IMR-90 (cell line): ENCODE measurements at regions of chr17 and their contacts with region 1.

Region 1: GRCh38 chr17:55053855-55054254 is 85.3 kb downstream of the STXBP4 start:
- DNase-seq: peak; percentile 13
- ATAC-seq: no peak
- H3K4me3 ChIP-seq: no peak overlapping the region
- H3K27ac ChIP-seq: no peak overlapping the region
- H3K4me1 ChIP-seq: no peaks in the 10 kb centered on the region
- H3K27me3 ChIP-seq: no peaks in the 10 kb centered on the region
- CTCF ChIP-seq: peak; percentile 46
- POLR2A ChIP-seq: no peak
- RAD21 ChIP-seq: peak; percentile 49

Region 2: DNA sequence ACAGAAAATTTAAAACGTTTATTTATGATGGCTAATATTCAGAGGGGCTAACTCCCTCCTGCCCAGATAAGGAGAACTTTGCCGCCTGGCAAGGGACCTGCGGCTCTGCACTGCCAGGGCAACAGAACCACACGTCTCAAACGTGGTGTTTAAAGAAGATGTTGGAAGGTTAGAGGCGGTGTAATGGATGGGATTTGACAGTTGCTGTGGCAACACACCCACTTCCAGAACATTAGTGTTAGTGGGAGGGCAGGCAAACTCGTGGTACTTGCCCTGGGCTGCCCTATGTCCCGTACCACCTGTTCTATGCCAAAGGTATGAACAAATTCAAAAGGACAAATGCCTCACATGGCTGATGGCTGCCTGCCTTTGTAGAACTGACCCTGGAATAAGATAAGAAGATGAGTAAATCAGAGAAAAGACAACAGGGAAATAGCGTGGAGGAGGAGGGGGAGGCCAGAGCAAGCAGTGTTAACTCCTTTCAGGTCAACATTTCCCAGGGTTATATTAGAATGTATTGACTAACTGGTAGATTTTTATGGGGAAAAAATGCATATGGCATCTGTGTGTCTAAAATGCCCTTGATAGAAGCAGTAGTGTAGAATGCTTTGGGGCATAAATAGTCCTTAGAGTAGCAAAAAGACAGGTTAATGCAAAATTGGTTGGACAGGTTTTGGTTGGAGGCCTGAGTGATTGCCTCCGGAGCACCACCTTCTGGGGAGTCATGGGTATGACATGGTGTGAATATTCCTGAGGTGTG is 241.7 kb after region 1 on chr17:
- CTCF ChIA-PET with region 1: no interaction called
- POLR2A ChIA-PET with region 1: no interaction called
- dilution Hi-C with region 1: no loop called
- in situ Hi-C with region 1: loop called (anchors 10 kb)
- intact Hi-C with region 1: loop called (anchors 1 kb)
- DNase-seq: peak; percentile 43
- ATAC-seq: peak; percentile 96
- H3K4me3 ChIP-seq: no peak overlapping the region
- H3K27ac ChIP-seq: no peak overlapping the region
- H3K4me1 ChIP-seq: no peaks in the 10 kb centered on the region
- H3K27me3 ChIP-seq: peaks cover 4% of the 10 kb centered on the region; the same call in 1 of the 2 replicates
- CTCF ChIP-seq: peak; percentile 83
- POLR2A ChIP-seq: no peak
- RAD21 ChIP-seq: peak; percentile 77

Region 3: GRCh38 chr17:55348749-55349354 is 295.0 kb after region 1 on chr17:
- CTCF ChIA-PET with region 1: no interaction called
- POLR2A ChIA-PET with region 1: no interaction called
- dilution Hi-C with region 1: no loop called
- in situ Hi-C with region 1: no loop called
- intact Hi-C with region 1: loop called (anchors 5 kb)
- DNase-seq: peak; percentile 43
- ATAC-seq: peak; percentile 90
- H3K4me3 ChIP-seq: no peak overlapping the region
- H3K27ac ChIP-seq: no peak overlapping the region
- H3K4me1 ChIP-seq: no peaks in the 10 kb centered on the region
- H3K27me3 ChIP-seq: peaks cover 9% of the 10 kb centered on the region
- CTCF ChIP-seq: peak; percentile 85
- POLR2A ChIP-seq: no peak
- RAD21 ChIP-seq: peak; percentile 68